ENCODE measurements at regions of chr5 and their contacts with region 1.

Region 1: DNA sequence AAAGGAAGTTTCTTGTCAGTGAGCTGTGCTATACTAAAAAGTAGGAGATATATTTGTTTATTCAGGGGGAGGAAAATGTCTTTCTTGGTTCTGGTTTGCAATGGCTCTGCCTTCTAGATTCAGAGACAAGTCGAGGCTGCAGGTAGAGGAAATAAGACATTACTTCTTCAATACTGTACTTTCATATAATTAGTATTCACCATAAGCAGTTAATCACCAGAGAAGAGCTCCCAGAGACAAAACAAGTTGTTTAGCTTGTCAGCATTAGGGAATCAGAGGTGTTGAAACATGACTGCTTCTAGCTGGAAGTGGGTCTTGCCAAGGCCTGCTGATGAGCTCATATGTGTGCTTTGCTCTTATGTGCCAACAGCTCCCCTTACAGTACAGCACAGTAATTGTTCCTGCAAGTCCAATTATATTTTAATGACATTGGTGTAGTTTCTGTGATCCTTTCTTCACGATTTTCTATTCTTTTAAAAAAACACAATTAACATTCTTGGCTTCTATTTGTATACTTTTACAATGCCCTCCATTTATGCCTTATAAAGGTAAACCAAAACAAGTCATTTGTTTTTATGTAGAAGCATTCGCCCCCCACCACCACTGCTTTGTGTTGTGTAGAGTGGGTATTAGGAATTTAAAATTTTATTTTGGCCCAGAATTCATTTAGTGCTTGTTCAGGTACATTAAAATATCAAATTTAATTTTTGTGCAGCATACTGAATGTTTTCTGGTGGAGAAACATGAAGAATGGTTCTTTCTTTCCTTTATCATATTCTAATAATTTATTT is 112.2 kb downstream of the RPS23 start:
- DNase-seq: peak; percentile 39
- ATAC-seq: peak; percentile 92
- H3K4me3 ChIP-seq: no peak overlapping the region
- H3K27ac ChIP-seq: no peak overlapping the region; the same call in 1 of the 2 replicates
- H3K4me1 ChIP-seq: peaks cover 12% of the 10 kb centered on the region; the same call in 1 of the 2 replicates
- H3K27me3 ChIP-seq: no peaks in the 10 kb centered on the region
- CTCF ChIP-seq: peak; percentile 64 to 90 (median 67)
- EP300 ChIP-seq: no peak
- POLR2A ChIP-seq: no peak
- RAD21 ChIP-seq: peak; percentile 95

Region 2: GRCh38 chr5:81363093-81364080 is 802.5 kb before region 1 on chr5:
- CTCF ChIA-PET with region 1: no interaction called
- POLR2A ChIA-PET with region 1: no interaction called
- RAD21 ChIA-PET with region 1: no interaction called
- SMC1A ChIA-PET with region 1: no interaction called
- in situ Hi-C with region 1: no loop called
- intact Hi-C with region 1: no loop called
- DNase-seq: no peak
- ATAC-seq: no peak
- H3K4me3 ChIP-seq: no peak overlapping the region
- H3K27ac ChIP-seq: no peak overlapping the region
- H3K4me1 ChIP-seq: no peaks in the 10 kb centered on the region
- H3K27me3 ChIP-seq: no peaks in the 10 kb centered on the region; a peak in 1 of 4 replicates
- CTCF ChIP-seq: no peak
- EP300 ChIP-seq: no peak
- POLR2A ChIP-seq: no peak
- RAD21 ChIP-seq: no peak

Region 3: GRCh38 chr5:81506900-81507588 is 658.9 kb before region 1 on chr5:
- CTCF ChIA-PET with region 1: interaction called, 94 read pairs
- POLR2A ChIA-PET with region 1: interaction called, 3 read pairs
- RAD21 ChIA-PET with region 1: interaction called, 113 read pairs
- SMC1A ChIA-PET with region 1: interaction called, 122 read pairs
- in situ Hi-C with region 1: loop called (anchors 5 kb)
- intact Hi-C with region 1: loop called (anchors 2 kb)
- DNase-seq: peak; percentile 67
- ATAC-seq: peak; percentile 100
- H3K4me3 ChIP-seq: no peak overlapping the region
- H3K27ac ChIP-seq: no peak overlapping the region
- H3K4me1 ChIP-seq: no peaks in the 10 kb centered on the region
- H3K27me3 ChIP-seq: no peaks in the 10 kb centered on the region
- CTCF ChIP-seq: peak; percentile 84 to 91 (median 90); a peak in 5 of 6 replicates
- EP300 ChIP-seq: no peak
- POLR2A ChIP-seq: no peak
- RAD21 ChIP-seq: peak; percentile 92

Region 4: GRCh38 chr5:81779125-81779915 is 386.6 kb before region 1 on chr5:
- CTCF ChIA-PET with region 1: interaction called, 12 read pairs
- POLR2A ChIA-PET with region 1: no interaction called
- RAD21 ChIA-PET with region 1: interaction called, 11 read pairs
- SMC1A ChIA-PET with region 1: interaction called, 10 read pairs
- in situ Hi-C with region 1: no loop called
- intact Hi-C with region 1: no loop called
- DNase-seq: peak; percentile 23
- ATAC-seq: peak; percentile 95
- H3K4me3 ChIP-seq: peak overlapping the region; percentile 48
- H3K27ac ChIP-seq: peak overlapping the region; percentile 64
- H3K4me1 ChIP-seq: peaks cover 4% of the 10 kb centered on the region; the same call in 1 of the 2 replicates
- H3K27me3 ChIP-seq: no peaks in the 10 kb centered on the region
- CTCF ChIP-seq: no peak
- EP300 ChIP-seq: no peak
- POLR2A ChIP-seq: peak; percentile 77
- RAD21 ChIP-seq: no peak

Region 5: GRCh38 chr5:81856948-81857928 is 308.7 kb before region 1 on chr5:
- CTCF ChIA-PET with region 1: interaction called, 35 read pairs
- POLR2A ChIA-PET with region 1: interaction called, 3 read pairs
- RAD21 ChIA-PET with region 1: interaction called, 29 read pairs
- SMC1A ChIA-PET with region 1: interaction called, 31 read pairs
- in situ Hi-C with region 1: no loop called
- intact Hi-C with region 1: loop called (anchors 2 kb)
- DNase-seq: no peak
- ATAC-seq: peak; percentile 59
- H3K4me3 ChIP-seq: no peak overlapping the region
- H3K27ac ChIP-seq: no peak overlapping the region
- H3K4me1 ChIP-seq: peaks cover 18% of the 10 kb centered on the region
- H3K27me3 ChIP-seq: no peaks in the 10 kb centered on the region
- CTCF ChIP-seq: peak; percentile 19 to 54 (median 50)
- EP300 ChIP-seq: no peak
- POLR2A ChIP-seq: no peak
- RAD21 ChIP-seq: peak; percentile 26; the same call in 1 of the 2 replicates

Region 6: GRCh38 chr5:82107267-82107666 is 58.7 kb before region 1 on chr5:
- CTCF ChIA-PET with region 1: interaction called, 113 read pairs
- POLR2A ChIA-PET with region 1: interaction called, 3 read pairs
- RAD21 ChIA-PET with region 1: interaction called, 76 read pairs
- SMC1A ChIA-PET with region 1: interaction called, 109 read pairs
- in situ Hi-C with region 1: no loop called
- intact Hi-C with region 1: loop called (anchors 1 kb)
- DNase-seq: no peak
- ATAC-seq: peak; percentile 51
- H3K4me3 ChIP-seq: no peak overlapping the region
- H3K27ac ChIP-seq: no peak overlapping the region
- H3K4me1 ChIP-seq: no peaks in the 10 kb centered on the region
- H3K27me3 ChIP-seq: no peaks in the 10 kb centered on the region
- CTCF ChIP-seq: peak; percentile 29 to 50 (median 49); a peak in 5 of 6 replicates
- EP300 ChIP-seq: no peak
- POLR2A ChIP-seq: no peak
- RAD21 ChIP-seq: peak; percentile 57

Region 7: GRCh38 chr5:82225525-82226172 is 59.7 kb after region 1 on chr5:
- CTCF ChIA-PET with region 1: interaction called, 177 read pairs
- POLR2A ChIA-PET with region 1: interaction called, 3 read pairs
- RAD21 ChIA-PET with region 1: interaction called, 59 read pairs
- SMC1A ChIA-PET with region 1: interaction called, 159 read pairs
- in situ Hi-C with region 1: no loop called
- intact Hi-C with region 1: no loop called
- DNase-seq: peak; percentile 37
- ATAC-seq: peak; percentile 97
- H3K4me3 ChIP-seq: no peak overlapping the region
- H3K27ac ChIP-seq: no peak overlapping the region
- H3K4me1 ChIP-seq: no peaks in the 10 kb centered on the region
- H3K27me3 ChIP-seq: no peaks in the 10 kb centered on the region
- CTCF ChIP-seq: peak; percentile 82 to 94 (median 89)
- EP300 ChIP-seq: no peak
- POLR2A ChIP-seq: no peak
- RAD21 ChIP-seq: peak; percentile 96